Dendritic cell treated with granulocyte-macrophage colony-stimulating factor and Interleukin-4, amounts not matched to agents 40 ng/mL and 50 ng/mL, for 4 days (primary cell): ENCODE measurements at regions of chr12 and their contacts with region 1.

Region 1: GRCh38 chr12:80946594-80946993 is 8.9 kb upstream of the LIN7A start:
- H3K4me3 Mint-ChIP-seq: no peak overlapping the region
- H3K27ac Mint-ChIP-seq: no peak overlapping the region
- H3K4me1 Mint-ChIP-seq: peaks cover 11% of the 10 kb centered on the region
- H3K27me3 Mint-ChIP-seq: no peaks in the 10 kb centered on the region

Region 2: DNA sequence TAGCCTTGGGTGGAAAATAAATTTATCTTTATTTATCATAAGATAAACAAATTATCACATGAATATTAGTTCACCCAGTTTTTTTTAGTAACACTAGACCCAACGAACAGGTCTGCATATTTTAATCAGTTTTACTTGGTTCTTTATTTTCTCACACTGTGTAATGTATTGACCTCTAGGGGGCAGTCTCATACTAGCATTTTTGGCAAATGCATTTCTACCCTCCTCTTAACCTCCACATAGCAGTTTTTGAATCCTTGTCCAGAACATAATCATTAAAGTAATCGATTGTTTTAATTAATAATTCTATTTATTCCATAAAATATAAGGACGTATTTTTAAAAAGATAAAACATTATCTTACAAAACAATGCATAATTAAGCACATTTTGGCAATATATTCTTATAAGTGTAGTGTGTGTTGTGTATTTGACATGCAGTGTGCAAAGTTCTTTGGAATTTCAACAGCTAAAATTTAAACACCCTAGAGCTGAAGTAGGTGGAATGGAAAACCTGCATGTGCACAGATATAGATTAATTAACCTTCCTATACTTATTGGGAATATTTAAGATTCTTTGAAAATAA is 534.1 kb before region 1 on chr12:
- intact Hi-C with region 1: loop called (anchors 5 kb)
- H3K4me3 Mint-ChIP-seq: no peak overlapping the region
- H3K27ac Mint-ChIP-seq: no peak overlapping the region
- H3K4me1 Mint-ChIP-seq: no peaks in the 10 kb centered on the region
- H3K27me3 Mint-ChIP-seq: no peaks in the 10 kb centered on the region

Region 3: GRCh38 chr12:80472902-80473500 is 473.6 kb before region 1 on chr12:
- intact Hi-C with region 1: loop called (anchors 5 kb)
- H3K4me3 Mint-ChIP-seq: no peak overlapping the region
- H3K27ac Mint-ChIP-seq: no peak overlapping the region
- H3K4me1 Mint-ChIP-seq: no peaks in the 10 kb centered on the region
- H3K27me3 Mint-ChIP-seq: no peaks in the 10 kb centered on the region

Region 4: GRCh38 chr12:80778005-80778541 is 168.5 kb before region 1 on chr12:
- intact Hi-C with region 1: loop called (anchors 10 kb)
- H3K4me3 Mint-ChIP-seq: no peak overlapping the region
- H3K27ac Mint-ChIP-seq: peak overlapping the region; percentile 48
- H3K4me1 Mint-ChIP-seq: peaks cover 20% of the 10 kb centered on the region
- H3K27me3 Mint-ChIP-seq: no peaks in the 10 kb centered on the region

Region 5: DNA sequence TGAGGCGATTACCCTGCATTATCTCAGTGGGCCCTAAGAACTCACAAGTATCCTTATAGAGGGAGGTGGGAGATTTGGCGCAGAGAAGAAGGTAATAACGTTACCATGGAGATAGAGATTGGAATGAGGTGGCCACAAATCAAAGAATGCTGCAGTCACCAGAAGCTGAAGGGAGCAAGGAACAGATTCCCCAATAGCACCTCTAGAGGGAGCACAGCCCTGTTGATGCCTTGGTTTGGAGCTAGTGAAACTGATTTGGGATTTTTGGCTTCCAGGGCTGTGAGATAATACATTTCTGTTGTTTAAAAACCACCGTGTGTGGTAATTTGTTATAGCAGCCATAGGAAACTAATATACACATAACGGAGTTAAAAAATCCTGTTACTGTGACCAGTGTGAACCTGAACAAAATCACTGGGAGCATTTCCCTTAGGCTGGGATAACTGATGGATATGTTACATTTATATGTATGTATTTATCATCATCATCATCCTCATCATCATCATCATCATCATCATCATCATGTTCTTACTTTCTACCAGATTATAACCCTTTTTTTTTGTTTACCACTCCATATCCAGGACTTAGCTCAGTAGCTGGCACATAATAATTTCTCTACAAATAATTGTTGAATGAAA is 109.1 kb before region 1 on chr12:
- intact Hi-C with region 1: loop called (anchors 5 kb)
- H3K4me3 Mint-ChIP-seq: no peak overlapping the region
- H3K27ac Mint-ChIP-seq: no peak overlapping the region
- H3K4me1 Mint-ChIP-seq: peaks cover 10% of the 10 kb centered on the region
- H3K27me3 Mint-ChIP-seq: no peaks in the 10 kb centered on the region

Region 6: DNA sequence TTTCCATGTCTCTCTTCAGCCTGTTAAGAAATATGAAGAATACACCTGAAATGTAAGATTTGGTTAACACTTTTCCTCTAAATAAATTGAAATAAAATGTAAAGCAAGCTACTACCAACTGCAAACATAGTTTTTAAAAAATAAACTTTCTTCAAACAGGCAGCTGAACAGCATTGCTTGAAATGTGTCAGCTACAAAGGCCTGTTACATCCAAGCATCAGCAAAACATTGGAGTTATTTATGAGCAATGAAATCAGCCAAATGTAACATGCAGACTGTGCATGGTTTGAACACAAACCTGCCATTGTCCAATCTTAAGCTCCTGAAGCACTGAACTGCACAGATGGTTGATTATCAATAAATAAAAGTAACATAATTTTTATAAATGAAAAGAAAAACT is 422.6 kb after region 1 on chr12:
- intact Hi-C with region 1: no loop called
- H3K4me3 Mint-ChIP-seq: no peak overlapping the region
- H3K27ac Mint-ChIP-seq: no peak overlapping the region
- H3K4me1 Mint-ChIP-seq: no peaks in the 10 kb centered on the region
- H3K27me3 Mint-ChIP-seq: no peaks in the 10 kb centered on the region